AG04449 (cell line): ENCODE measurements at regions of chr17 and their contacts with region 1.

Region 1: GRCh38 chr17:76458580-76459490 is 5.9 kb upstream of the UBE2O start:
- DNase-seq: no peak
- H3K4me3 ChIP-seq: no peak overlapping the region
- CTCF ChIP-seq: peak; percentile 87

Region 2: DNA sequence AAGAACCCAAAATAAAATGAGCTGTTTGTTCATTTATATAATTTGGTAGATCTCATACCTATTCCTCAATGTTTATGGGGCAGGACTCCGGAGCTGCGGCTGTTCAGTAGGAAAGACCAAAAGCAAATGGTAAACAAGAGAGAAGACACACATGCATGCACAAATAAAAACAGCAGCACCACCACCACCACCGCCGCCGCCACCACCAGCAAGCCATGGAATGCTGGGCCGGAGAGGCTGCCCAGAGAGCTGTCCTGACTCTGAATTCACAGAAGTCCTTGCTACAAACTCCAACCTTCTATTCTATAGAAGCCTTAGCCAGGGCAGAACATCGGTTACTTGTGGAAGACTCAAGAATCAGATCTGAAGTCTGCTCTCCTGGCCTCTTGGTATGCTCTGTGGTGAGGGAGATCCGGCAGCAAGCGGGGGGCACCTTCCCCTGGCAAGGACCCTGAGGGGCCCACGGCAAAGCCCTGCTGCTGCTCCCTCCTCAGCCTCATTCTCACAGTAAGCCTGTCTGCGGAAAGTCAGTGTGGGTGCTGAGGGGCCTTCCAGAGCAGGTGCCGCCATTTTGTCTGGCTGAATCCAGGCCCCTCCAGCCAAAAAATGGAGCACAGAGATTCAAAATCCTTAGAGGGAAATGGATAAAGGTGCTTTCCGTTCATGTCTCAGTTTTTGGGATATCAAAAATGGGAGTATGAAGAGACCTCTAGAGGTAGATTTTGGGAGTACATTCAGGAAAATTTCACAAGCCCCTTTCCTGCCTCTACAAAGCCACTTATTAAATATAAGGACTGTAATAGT is 311.4 kb before region 1 on chr17:
- CTCF ChIA-PET with region 1: no interaction called
- POLR2A ChIA-PET with region 1: no interaction called
- DNase-seq: no peak
- H3K4me3 ChIP-seq: no peak overlapping the region
- CTCF ChIP-seq: peak; percentile 33

Region 3: DNA sequence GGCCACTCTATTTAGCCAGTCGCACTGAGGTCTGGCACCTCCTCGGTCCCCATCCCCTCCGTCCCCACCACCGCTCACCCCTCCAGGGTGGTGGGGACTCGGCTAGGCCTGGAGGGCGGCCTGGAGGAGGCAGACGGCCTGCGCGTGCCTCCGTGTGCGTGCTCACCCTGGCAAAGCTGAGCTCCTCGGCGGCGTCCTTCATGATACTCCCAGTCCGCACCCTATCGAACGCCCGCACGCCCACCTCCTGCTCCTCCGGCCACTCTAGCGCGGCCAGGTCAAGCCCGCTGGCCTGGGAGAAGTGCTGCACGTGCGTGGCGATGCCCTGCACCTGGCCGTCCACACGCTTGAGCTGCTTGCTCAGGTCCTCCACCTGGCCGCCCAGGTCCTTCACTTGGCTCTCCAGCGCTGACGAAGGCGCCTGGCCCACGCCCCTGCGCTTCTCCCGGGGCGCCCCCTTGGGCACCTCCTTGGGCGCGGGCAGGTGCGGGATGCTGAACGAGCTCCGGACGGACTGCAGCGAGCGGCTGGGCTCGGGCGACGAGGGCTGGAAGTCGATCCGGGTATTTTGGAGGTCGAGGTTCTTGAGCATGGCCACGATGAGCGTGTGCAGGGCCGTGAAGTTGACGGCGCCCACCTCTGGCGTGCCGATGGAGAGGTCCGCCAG is 151.4 kb before region 1 on chr17:
- CTCF ChIA-PET with region 1: interaction called, 13 read pairs
- POLR2A ChIA-PET with region 1: no interaction called
- DNase-seq: no peak
- H3K4me3 ChIP-seq: no peak overlapping the region
- CTCF ChIP-seq: no peak

Region 4: GRCh38 chr17:76408052-76408849 is 50.6 kb before region 1 on chr17:
- CTCF ChIA-PET with region 1: interaction called, 75 read pairs
- POLR2A ChIA-PET with region 1: no interaction called
- DNase-seq: no peak
- H3K4me3 ChIP-seq: no peak overlapping the region
- CTCF ChIP-seq: peak; percentile 80

Region 5: GRCh38 chr17:76446449-76447231 is 12.2 kb before region 1 on chr17:
- CTCF ChIA-PET with region 1: interaction called, 41 read pairs
- POLR2A ChIA-PET with region 1: no interaction called
- DNase-seq: no peak
- H3K4me3 ChIP-seq: peak overlapping the region; percentile 10
- CTCF ChIP-seq: no peak

Region 6: GRCh38 chr17:76523084-76524037 is 64.5 kb after region 1 on chr17:
- CTCF ChIA-PET with region 1: interaction called, 12 read pairs
- POLR2A ChIA-PET with region 1: interaction called, 3 read pairs
- DNase-seq: no peak
- H3K4me3 ChIP-seq: peak overlapping the region; percentile 27; the same call in 1 of the 2 replicates
- CTCF ChIP-seq: peak; percentile 99